ENCODE measurements at regions of chr15 and their contacts with region 1.

Region 1: DNA sequence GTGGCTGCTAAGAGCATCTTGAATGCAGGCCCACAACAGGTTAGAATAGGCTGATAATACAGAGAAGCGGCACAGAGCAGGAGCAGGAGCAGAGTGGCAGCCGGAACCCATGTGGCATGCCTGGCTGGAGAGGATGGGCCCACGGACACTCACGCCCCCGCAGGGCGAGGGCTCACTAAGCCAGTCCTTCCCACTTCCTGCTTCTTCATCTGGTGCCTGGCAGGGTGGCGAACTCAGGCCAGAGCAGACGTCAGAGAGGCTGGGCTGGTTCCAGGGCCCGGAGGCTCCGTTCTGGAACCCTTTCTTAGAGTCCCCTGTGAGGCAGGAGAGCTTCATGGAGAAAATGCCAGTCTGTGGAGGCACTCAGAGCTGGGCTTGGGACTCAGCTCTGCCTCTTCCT is 195.1 kb downstream of the NTRK3 start:
- DNase-seq: no peak
- ATAC-seq: no peak

Region 2: DNA sequence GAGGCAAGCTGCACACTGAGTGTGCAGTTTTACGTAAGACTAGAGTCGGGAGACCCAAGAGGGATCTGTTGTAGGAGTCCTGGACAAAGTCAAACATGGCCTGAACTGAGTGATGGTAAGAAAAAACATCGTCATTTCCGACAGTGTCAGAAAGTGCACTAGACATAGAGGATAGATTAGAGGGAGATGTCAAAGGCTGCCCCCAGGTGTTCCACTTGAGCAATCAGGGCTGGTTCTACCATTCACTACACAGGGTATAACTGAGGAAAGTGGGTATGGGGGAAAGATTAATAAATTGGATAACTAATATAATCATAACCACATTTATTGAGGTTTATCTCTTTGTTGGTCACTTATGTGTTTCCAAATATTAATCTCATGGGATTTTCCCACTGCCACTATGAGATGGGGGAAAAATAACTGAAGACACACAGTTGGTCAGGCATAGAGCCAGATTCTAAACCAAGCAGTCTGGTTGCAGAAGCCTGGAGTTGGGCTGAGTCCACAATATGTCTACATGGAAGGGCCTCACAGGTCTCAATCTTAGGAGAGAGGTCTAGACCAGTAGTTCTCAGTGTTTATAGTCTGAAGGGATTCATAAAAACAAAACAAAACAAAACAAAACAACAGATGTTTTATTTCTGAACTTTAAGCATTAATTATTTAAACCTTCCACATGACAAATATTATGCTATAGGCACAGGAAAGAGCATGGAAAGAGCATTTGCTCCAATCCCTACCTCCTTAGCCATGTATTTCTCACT is 571.4 kb before region 1 on chr15:
- intact Hi-C with region 1: loop called in 1 of 2 experiments (anchors 10 kb)
- DNase-seq: no peak
- ATAC-seq: no peak

Region 3: GRCh38 chr15:87710406-87710805 is 351.0 kb before region 1 on chr15:
- intact Hi-C with region 1: no loop called
- DNase-seq: peak in 1 of 2 donors; percentile 27
- ATAC-seq: no peak

Region 4: GRCh38 chr15:87871130-87871737 is 190.2 kb before region 1 on chr15:
- intact Hi-C with region 1: no loop called
- DNase-seq: no peak
- ATAC-seq: no peak

Region 5: DNA sequence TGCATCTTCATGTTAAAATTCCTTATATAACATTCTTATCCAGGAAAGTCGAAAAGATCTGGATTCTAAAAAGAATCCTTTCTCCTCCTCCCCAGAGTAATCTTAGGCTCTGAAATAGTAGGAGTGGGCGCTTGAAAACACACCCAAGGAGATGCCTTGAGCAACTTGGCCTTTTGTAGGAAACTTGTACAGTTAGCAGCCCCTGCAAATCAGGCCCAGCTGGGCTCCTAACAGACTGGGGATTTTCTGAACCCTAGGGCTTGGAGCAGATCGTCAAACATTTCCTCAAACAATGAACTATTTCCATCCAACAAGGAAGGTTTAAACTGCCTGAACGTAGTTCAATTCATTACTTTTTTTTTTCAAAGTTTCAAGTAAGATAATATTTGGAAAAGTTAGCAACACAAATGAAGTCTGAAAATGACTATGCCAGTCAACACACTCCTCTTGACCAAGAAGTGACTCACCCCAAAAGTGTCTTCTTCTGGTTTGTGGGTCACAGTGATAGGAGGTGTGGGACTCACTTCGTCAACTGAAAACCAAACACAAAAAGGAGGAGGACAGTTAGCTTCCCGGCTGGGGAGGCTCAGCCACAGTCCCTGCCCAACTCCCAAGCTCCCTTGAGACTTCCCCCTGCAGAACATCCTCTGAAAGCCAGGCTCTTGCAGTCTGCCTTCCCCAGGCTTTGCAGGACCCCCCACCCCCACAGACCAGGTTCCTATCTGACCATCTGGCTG is 65.4 kb after region 1 on chr15:
- intact Hi-C with region 1: no loop called
- DNase-seq: no peak
- ATAC-seq: no peak

Region 6: DNA sequence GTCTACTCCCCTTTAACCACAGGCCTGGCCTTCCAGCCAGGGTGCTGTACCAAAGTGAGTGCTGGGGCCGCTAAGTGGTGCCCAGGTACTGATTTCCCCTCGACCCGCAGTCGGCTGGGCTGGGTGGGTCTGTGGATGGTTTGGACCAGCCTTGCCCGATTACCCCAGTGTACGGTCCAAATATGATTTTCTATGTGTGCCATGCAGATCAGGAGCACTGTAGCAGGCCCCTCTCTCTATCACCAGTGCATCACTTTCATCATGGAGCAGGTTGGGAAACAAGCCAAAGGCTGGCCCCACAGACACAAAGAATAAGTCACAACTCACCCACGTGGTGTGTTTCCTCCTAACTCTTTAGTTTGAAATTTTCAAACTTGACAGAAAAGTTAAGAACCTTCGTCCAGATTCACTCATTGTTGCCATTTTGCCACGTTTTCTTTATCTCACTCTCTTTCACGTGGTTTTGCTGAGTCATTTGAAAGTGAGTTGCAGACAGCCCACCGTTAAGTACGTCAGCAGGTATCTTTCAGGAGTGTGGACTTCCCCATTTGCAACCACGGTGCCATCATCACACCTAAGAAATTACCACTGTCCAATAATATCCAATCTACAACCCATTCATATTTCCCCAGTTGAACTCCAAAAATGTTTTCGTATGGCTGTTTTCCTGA is 1976.6 kb after region 1 on chr15:
- intact Hi-C with region 1: no loop called
- DNase-seq: peak in 1 of 2 donors; percentile 25
- ATAC-seq: no peak

Measured in left colon (tissue), 2 donors.